AG04449 (cell line): ENCODE measurements at regions of chr15 and their contacts with region 1.

Region 1: DNA sequence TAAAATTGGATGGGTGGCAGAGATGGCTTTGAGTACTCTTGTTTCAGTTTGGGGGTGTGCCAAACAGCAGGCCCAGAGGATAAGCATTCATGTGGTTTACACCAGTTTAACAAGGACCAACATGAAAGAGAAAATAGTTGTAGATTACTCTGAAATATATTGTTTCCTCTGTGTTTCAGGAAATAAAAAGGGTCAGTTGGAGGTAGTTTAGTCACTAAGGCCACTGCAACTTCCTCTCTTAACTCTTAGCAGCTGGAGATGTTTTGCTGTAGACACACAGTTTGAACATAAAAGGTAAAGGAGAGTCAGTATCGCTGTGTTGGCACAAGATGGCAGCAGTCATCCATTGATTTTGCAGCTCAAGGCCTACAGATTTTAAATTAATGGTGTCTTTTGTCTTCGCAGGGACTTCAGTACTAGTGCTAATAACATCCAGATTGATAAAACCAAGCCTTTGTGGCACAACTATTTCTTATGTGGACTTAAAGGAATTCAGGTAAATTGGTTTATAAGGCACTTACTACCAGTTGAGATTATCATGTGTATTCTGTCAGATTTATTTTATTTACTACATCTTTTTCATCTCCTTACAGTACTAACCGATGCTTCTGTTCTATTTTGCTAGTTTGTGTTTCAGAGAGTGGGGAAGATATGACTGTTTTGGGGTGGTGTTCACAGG is 65.5 kb downstream of the GALK2 start:
- DNase-seq: peak; percentile 59
- H3K4me3 ChIP-seq: no peak overlapping the region
- CTCF ChIP-seq: peak; percentile 66

Region 2: DNA sequence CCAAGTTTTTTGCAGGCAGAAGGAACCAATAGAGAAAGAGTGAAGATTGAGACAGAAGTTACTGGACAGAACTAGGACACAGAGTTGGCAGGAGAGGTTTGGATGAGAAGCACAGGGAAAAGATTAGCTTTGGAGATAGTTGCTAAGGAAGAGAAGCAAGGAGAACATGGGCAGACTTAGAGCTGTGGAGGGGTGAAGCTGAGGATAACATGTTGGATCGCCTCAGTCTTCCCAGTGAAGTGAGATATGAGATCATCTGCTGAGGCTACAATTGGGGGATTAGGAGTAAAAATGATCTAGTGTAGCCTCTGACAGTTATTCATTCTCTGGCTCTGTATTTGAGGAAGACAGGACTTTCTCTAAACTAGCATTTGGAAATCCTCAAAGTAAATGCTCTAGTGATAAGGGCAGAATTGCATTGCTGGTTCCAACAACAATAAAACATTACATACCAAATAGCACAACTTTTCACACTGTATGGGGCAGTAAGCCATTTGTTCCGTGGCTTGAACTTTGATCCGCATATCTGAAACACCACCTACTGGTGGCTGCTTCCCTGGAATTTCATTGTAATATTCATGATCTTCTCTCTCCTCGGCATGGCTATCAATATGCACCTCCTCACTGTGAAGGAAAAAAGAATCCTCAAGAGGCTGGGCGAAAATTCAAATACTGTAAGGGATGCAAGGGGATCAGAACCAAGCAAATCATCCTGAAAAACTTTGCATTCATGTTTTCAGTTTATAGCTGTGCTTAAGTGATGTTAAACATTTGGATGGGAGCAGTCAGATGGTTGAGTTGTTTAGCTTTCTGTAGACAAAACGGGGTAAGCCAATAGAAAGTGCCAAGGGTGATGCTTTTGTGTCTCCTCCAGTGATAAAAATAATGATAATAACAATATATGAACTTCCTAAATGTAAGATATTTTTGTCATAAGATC is 379.8 kb before region 1 on chr15:
- CTCF ChIA-PET with region 1: interaction called, 12 read pairs
- POLR2A ChIA-PET with region 1: no interaction called
- DNase-seq: peak; percentile 23
- H3K4me3 ChIP-seq: no peak overlapping the region
- CTCF ChIP-seq: peak; percentile 43

Region 3: GRCh38 chr15:49421991-49422390 is 186.4 kb after region 1 on chr15:
- CTCF ChIA-PET with region 1: interaction called, 184 read pairs
- POLR2A ChIA-PET with region 1: interaction called, 3 read pairs
- DNase-seq: no peak
- H3K4me3 ChIP-seq: no peak overlapping the region
- CTCF ChIP-seq: peak; percentile 45

Region 4: GRCh38 chr15:49769225-49769624 is 533.6 kb after region 1 on chr15:
- CTCF ChIA-PET with region 1: no interaction called
- POLR2A ChIA-PET with region 1: no interaction called
- DNase-seq: no peak
- H3K4me3 ChIP-seq: no peak overlapping the region
- CTCF ChIP-seq: no peak

Region 5: DNA sequence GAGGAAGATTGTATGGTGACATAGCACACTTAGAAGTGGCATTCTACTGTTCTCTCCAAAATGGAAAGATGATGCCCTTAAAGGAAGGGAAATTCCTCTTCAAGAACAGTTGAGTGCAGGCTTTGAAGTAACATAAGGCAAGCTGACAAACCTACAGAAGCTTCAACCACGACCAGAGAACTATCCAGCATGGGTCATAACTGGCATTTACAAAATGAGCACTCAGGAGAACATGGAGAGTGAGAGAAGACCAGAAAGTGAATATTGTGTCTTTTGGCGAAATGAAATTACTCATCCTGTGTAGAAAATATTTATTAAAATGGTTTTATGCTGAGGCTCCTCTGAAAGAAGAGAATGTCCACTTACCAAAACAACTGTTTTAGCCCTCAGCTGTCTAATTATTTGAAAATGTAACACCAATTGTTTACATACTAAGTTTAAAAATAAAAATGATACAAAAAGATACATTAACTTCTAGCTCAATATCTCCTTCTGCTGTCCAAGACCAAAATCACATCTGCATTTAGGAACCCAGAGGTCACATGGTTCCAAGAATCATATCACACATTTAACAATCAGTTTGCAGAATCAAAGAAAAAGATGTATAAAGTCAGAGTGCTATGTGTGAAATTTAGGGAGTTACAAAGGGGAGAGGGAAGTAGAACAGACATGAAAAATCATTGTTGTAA is 666.6 kb after region 1 on chr15:
- CTCF ChIA-PET with region 1: interaction called, 16 read pairs
- POLR2A ChIA-PET with region 1: no interaction called
- DNase-seq: no peak
- H3K4me3 ChIP-seq: no peak overlapping the region
- CTCF ChIP-seq: peak; percentile 37

Region 6: DNA sequence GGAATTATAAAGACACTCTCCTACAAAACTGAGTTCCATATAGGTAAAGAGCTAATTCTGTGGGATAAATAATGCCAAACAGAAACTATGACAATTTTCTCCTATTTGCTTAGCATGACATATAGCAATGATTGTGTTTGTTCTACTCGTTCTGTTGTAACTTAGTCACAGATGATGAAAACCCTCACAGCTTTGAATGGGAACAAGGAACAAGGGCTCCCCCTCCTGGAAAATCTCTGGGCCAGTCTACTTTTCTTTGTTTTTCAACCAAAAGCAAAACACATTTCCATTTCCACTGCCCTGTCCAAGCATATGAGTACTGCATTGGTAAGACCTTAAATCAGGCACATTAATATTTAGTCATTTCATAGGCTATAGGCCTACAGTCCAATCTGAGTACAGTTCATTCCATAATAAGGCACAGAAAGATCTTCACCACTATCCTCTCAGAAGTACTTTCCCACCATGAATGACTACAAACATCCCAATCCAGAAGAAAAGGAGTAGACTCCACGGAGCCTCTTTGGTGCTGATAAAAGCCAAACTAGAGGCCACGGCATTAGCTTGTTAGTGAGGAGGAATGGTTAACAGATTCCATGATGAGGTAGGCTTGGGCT is 816.3 kb after region 1 on chr15:
- CTCF ChIA-PET with region 1: interaction called, 58 read pairs
- POLR2A ChIA-PET with region 1: no interaction called
- DNase-seq: peak; percentile 52
- H3K4me3 ChIP-seq: no peak overlapping the region
- CTCF ChIP-seq: peak; percentile 69

Region 7: GRCh38 chr15:50145451-50145872 is 909.9 kb after region 1 on chr15:
- CTCF ChIA-PET with region 1: interaction called, 20 read pairs
- POLR2A ChIA-PET with region 1: no interaction called
- DNase-seq: peak; percentile 24
- H3K4me3 ChIP-seq: no peak overlapping the region
- CTCF ChIP-seq: no peak